Dendritic cell treated with granulocyte-macrophage colony-stimulating factor and Interleukin-4, amounts not matched to agents 40 ng/mL and 50 ng/mL, for 4 days (primary cell): ENCODE measurements at regions of chr3 and their contacts with region 1.

Region 1: GRCh38 chr3:157130467-157131251 is 29.3 kb downstream of the CCNL1 start:
- H3K4me3 Mint-ChIP-seq: no peak overlapping the region
- H3K27ac Mint-ChIP-seq: no peak overlapping the region
- H3K4me1 Mint-ChIP-seq: peaks cover 27% of the 10 kb centered on the region
- H3K27me3 Mint-ChIP-seq: peaks cover 5% of the 10 kb centered on the region

Region 2: GRCh38 chr3:156705761-156706631 is 424.7 kb before region 1 on chr3:
- intact Hi-C with region 1: loop called (anchors 10 kb)
- H3K4me3 Mint-ChIP-seq: no peak overlapping the region
- H3K27ac Mint-ChIP-seq: peak overlapping the region; percentile 64
- H3K4me1 Mint-ChIP-seq: peaks cover 30% of the 10 kb centered on the region
- H3K27me3 Mint-ChIP-seq: no peaks in the 10 kb centered on the region

Region 3: GRCh38 chr3:156997351-156997750 is 133.3 kb before region 1 on chr3:
- intact Hi-C with region 1: no loop called
- H3K4me3 Mint-ChIP-seq: no peak overlapping the region
- H3K27ac Mint-ChIP-seq: no peak overlapping the region
- H3K4me1 Mint-ChIP-seq: no peaks in the 10 kb centered on the region
- H3K27me3 Mint-ChIP-seq: peaks cover 2% of the 10 kb centered on the region

Region 4: GRCh38 chr3:157261000-157261399 is 130.3 kb after region 1 on chr3:
- intact Hi-C with region 1: no loop called
- H3K4me3 Mint-ChIP-seq: no peak overlapping the region
- H3K27ac Mint-ChIP-seq: no peak overlapping the region
- H3K4me1 Mint-ChIP-seq: no peaks in the 10 kb centered on the region
- H3K27me3 Mint-ChIP-seq: no peaks in the 10 kb centered on the region

Region 5: GRCh38 chr3:157376603-157377300 is 246.1 kb after region 1 on chr3:
- intact Hi-C with region 1: no loop called
- H3K4me3 Mint-ChIP-seq: no peak overlapping the region
- H3K27ac Mint-ChIP-seq: no peak overlapping the region
- H3K4me1 Mint-ChIP-seq: no peaks in the 10 kb centered on the region
- H3K27me3 Mint-ChIP-seq: no peaks in the 10 kb centered on the region